ENCODE measurements at regions of chr10 and their contacts with region 1.

Region 1: GRCh38 chr10:73940634-73941221 is 29.8 kb downstream of the PLAU start:
- DNase-seq: peak; percentile 87
- H3K4me3 Mint-ChIP-seq: no peak overlapping the region
- H3K27ac Mint-ChIP-seq: no peak overlapping the region
- H3K4me1 Mint-ChIP-seq: peaks cover 5% of the 10 kb centered on the region
- H3K27me3 Mint-ChIP-seq: no peaks in the 10 kb centered on the region

Region 2: DNA sequence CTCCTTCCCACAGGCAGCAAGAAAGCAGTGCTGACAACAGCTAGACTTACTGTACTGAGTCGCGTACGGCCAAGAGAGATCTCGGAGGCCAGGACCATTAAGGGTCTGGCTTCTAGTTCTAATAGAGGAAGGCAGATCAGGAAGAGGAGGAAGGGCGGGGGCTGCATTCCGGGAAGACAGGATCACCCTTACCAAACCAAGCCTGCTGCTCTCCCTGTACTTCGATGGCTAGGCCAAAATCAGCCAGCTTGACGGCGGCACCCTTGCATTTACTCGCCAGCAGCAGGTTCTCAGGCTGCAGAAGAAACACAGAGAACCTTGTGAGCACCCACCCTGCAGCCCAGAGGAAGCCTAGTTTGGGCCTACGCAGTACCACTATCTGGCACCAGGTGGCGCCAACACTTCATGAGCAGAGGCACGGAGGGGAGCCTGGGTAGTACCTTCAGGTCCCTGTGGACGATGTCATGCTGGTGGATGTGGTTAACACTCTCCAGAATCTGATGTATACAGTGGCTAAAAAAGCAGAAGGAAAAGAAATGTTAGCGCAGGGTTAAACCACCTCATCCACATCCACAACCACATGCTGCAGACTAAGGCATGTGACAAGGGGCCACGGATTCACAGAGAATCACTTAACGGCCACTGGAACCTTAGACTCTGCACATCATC is 91.8 kb before region 1 on chr10:
- CTCF ChIA-PET with region 1: interaction called, 50 read pairs
- intact Hi-C with region 1: loop called (anchors 1 kb)
- DNase-seq: peak; percentile 96
- H3K4me3 Mint-ChIP-seq: no peak overlapping the region
- H3K27ac Mint-ChIP-seq: peak overlapping the region; percentile 66
- H3K4me1 Mint-ChIP-seq: peaks cover 8% of the 10 kb centered on the region
- H3K27me3 Mint-ChIP-seq: no peaks in the 10 kb centered on the region

Region 3: DNA sequence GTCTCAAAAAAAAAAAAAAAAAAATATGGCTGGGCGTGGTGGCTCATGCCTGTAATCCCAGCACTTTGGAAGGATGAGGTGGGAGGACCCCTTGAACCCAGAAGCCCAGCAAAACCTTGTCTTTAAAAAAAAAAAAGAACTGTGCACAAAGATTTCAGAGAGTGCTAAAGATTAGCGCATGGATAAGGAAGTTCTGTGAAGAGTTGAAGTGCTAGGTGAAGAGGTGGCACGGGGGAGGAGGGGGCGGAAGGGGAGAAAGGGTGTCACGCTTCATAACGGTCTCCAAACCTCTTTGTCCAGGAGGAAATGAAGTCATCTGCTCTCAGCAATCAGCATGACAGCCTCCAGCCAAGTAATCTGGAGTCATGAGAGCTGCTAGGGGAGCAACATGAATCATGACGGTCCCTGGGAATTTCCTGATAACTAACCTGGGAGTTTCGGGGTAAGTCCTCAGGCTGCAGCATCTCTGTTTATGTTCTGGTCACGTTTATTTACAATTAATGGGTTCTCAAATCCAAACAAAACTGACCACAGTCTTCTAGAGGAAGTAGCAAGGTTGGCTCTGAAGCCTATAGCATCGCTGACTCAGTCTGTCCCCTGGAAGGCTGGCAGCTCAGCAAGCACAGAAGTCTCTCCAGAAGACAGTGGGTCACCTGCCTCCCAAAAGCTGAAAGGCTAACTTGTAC is 31.7 kb before region 1 on chr10:
- CTCF ChIA-PET with region 1: interaction called, 11 read pairs
- intact Hi-C with region 1: no loop called
- DNase-seq: peak; percentile 86
- H3K4me3 Mint-ChIP-seq: peak overlapping the region; percentile 20
- H3K27ac Mint-ChIP-seq: peak overlapping the region; percentile 7
- H3K4me1 Mint-ChIP-seq: peaks cover 34% of the 10 kb centered on the region
- H3K27me3 Mint-ChIP-seq: peaks cover 38% of the 10 kb centered on the region

Region 4: GRCh38 chr10:73926152-73926764 is 14.5 kb before region 1 on chr10:
- CTCF ChIA-PET with region 1: interaction called, 26 read pairs
- intact Hi-C with region 1: no loop called
- DNase-seq: no peak
- H3K4me3 Mint-ChIP-seq: no peak overlapping the region
- H3K27ac Mint-ChIP-seq: no peak overlapping the region
- H3K4me1 Mint-ChIP-seq: peaks cover 14% of the 10 kb centered on the region
- H3K27me3 Mint-ChIP-seq: peaks cover 28% of the 10 kb centered on the region

Region 5: DNA sequence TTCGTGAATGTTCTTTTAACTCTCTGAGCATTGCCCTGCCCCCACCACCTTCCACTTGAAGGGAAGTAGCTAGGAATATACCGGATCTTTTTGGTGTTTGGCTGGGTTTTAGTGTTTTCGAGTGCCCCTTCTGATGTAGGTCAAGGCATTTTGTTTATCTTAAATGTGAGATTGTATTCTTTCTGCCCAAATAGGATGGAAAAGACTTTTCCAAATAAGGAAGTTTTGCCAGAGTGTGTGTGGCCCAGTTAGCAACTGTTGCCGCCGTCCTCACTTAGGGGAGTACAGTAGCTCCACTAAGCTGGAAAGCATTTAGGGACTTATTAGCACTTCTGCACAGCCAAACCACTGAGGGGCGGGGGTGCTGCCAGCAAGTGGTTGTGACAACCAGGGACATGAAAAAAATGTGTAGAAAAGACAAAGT is 27.4 kb after region 1 on chr10:
- CTCF ChIA-PET with region 1: interaction called, 14 read pairs
- intact Hi-C with region 1: no loop called
- DNase-seq: no peak
- H3K4me3 Mint-ChIP-seq: no peak overlapping the region
- H3K27ac Mint-ChIP-seq: no peak overlapping the region
- H3K4me1 Mint-ChIP-seq: peaks cover 2% of the 10 kb centered on the region
- H3K27me3 Mint-ChIP-seq: no peaks in the 10 kb centered on the region